PC-9 (cell line): ENCODE measurements at regions of chr9 and their contacts with region 1.

Region 1: DNA sequence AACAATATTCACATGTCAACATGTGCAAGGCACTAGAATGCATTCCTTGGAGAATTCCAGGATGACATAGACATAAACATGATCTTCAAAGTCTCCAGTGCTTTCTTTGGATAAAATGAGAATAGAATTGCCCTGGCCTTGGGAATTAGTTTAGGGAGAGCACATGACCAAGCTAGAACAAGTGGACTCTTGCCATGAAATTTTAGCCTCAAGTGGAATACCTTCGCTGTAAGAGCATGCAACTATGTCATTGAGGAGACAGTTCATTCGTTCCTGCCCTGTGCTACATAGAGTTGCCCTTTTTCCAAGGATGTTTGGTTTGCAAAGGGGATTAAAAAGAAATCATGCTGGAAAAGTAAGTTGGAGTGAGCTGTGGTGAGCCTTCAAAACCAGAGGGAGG is 42.7 kb downstream of the ZFAND5 start:
- DNase-seq: no peak
- H3K4me3 ChIP-seq: no peak overlapping the region
- H3K27ac ChIP-seq: no peak overlapping the region
- H3K4me1 ChIP-seq: no peaks in the 10 kb centered on the region
- H3K27me3 ChIP-seq: no peaks in the 10 kb centered on the region
- CTCF ChIP-seq: no peak

Region 2: DNA sequence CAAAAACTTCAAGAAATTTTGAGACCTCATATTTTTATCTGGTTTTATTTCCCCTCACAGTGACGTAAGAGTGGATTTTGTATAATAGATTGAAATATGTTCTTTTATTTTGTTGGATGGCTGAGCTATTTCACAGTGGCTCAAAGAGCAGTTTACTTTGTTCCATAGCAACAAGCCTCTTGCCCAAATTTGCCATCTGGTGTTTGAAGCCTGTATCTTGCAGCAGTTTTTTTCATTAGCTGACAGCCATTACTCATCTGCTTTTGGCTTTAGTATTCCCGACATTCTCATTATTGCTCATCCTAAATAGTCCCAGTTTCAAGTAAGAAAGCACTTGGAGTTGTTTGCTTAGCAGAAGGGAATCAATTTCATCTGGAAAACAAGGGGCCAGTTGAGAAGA is 136.7 kb before region 1 on chr9:
- CTCF ChIA-PET with region 1: no interaction called
- POLR2A ChIA-PET with region 1: no interaction called
- intact Hi-C with region 1: no loop called
- DNase-seq: no peak
- H3K4me3 ChIP-seq: no peak overlapping the region
- H3K27ac ChIP-seq: no peak overlapping the region
- H3K4me1 ChIP-seq: no peaks in the 10 kb centered on the region
- H3K27me3 ChIP-seq: no peaks in the 10 kb centered on the region
- CTCF ChIP-seq: no peak

Region 3: GRCh38 chr9:72665421-72665820 is 343.2 kb after region 1 on chr9:
- CTCF ChIA-PET with region 1: no interaction called
- POLR2A ChIA-PET with region 1: interaction called, 10 read pairs
- intact Hi-C with region 1: no loop called
- DNase-seq: peak; percentile 37 to 45
- H3K4me3 ChIP-seq: no peak overlapping the region
- H3K27ac ChIP-seq: no peak overlapping the region
- H3K4me1 ChIP-seq: peaks cover 9% of the 10 kb centered on the region
- H3K27me3 ChIP-seq: no peaks in the 10 kb centered on the region
- CTCF ChIP-seq: no peak